ENCODE measurements at regions of chr21 and their contacts with region 1.

Region 1: DNA sequence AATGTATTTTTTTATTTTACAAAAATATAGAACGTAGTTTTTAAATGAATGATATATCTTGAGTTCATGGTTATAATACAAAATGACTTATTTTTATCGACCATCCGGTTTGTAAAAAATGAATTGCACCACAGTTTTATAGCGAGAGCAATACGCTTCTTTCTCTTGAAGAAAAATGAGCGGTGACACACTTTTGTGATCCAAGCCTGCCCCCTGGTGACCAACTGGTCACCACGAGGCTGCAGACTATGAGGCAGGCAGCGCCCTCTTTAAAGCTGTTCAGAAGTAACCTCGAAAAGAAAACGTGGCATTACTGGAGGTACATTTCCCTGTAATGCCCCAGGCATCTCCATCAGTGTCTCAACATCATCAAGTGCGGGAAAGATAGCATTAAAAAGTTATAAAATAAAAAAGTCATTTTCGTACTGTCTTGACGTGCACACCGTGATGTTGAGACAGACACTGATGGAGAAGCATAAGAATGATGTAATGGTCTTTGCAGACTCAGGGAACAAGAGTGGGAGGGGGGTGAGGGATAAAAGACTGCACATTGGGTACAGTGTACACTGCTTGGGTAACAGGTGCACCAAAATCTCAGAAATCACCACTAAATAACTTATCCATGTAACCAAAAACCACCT is 734.2 kb upstream of the ADAMTS5 start:
- DNase-seq: peak; percentile 80 to 89 (median 86)
- H3K4me3 ChIP-seq: no peak overlapping the region
- H3K27ac ChIP-seq: no peak overlapping the region
- H3K4me1 ChIP-seq: no peaks in the 10 kb centered on the region
- H3K27me3 ChIP-seq: peaks cover 0 to 2% (median 0%) of the 10 kb centered on the region in 5 experiments

Region 2: GRCh38 chr21:26881504-26882228 is 819.4 kb before region 1 on chr21:
- CTCF ChIA-PET with region 1: interaction called, 10 read pairs
- POLR2A ChIA-PET with region 1: no interaction called
- DNase-seq: peak; percentile 4 to 41 (median 20)
- H3K4me3 ChIP-seq: no peak overlapping the region
- H3K27ac ChIP-seq: no peak overlapping the region
- H3K4me1 ChIP-seq: no peaks in the 10 kb centered on the region
- H3K27me3 ChIP-seq: no peaks in the 10 kb centered on the region